MCF 10A (cell line): ENCODE measurements at regions of chr4 and their contacts with region 1.

Region 1: GRCh38 chr4:158996669-158997074 is 106.2 kb upstream of the RAPGEF2 start:
- DNase-seq: peak; percentile 97
- H3K4me3 Mint-ChIP-seq: no peak overlapping the region
- H3K27ac Mint-ChIP-seq: peak overlapping the region; percentile 63
- H3K4me1 Mint-ChIP-seq: peaks cover 17% of the 10 kb centered on the region
- H3K27me3 Mint-ChIP-seq: no peaks in the 10 kb centered on the region
- CTCF ChIP-seq: no peak

Region 2: GRCh38 chr4:158895797-158896576 is 100.7 kb before region 1 on chr4:
- CTCF ChIA-PET with region 1: no interaction called
- POLR2A ChIA-PET with region 1: no interaction called
- intact Hi-C with region 1: loop called (anchors 10 kb)
- DNase-seq: peak; percentile 30
- H3K4me3 Mint-ChIP-seq: no peak overlapping the region
- H3K27ac Mint-ChIP-seq: no peak overlapping the region
- H3K4me1 Mint-ChIP-seq: no peaks in the 10 kb centered on the region
- H3K27me3 Mint-ChIP-seq: no peaks in the 10 kb centered on the region
- CTCF ChIP-seq: no peak

Region 3: GRCh38 chr4:158914218-158914617 is 82.5 kb before region 1 on chr4:
- CTCF ChIA-PET with region 1: no interaction called
- POLR2A ChIA-PET with region 1: no interaction called
- intact Hi-C with region 1: no loop called
- DNase-seq: peak; percentile 68
- H3K4me3 Mint-ChIP-seq: no peak overlapping the region
- H3K27ac Mint-ChIP-seq: peak overlapping the region; percentile 44
- H3K4me1 Mint-ChIP-seq: peaks cover 11% of the 10 kb centered on the region
- H3K27me3 Mint-ChIP-seq: no peaks in the 10 kb centered on the region
- CTCF ChIP-seq: no peak

Region 4: DNA sequence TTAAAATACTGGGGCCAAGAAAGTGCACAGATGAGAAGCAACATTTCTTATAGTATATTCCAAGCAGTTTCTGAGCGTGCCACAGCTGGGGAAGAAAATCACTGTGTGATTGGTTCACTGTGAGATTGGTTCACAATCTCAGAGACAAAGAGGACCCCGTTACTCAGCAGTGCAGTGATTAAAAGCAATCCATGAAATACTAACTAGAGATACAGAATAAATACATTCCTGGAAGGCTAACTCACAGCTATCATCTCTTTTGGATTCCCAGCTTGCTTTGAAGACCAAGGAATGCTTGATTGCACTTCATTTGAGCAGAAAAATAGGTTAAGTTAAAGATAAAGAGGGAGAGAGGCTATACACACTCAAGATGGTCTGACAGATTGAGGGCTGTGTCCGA is 25.9 kb before region 1 on chr4:
- CTCF ChIA-PET with region 1: no interaction called
- POLR2A ChIA-PET with region 1: no interaction called
- intact Hi-C with region 1: no loop called
- DNase-seq: no peak
- H3K4me3 Mint-ChIP-seq: no peak overlapping the region
- H3K27ac Mint-ChIP-seq: no peak overlapping the region
- H3K4me1 Mint-ChIP-seq: no peaks in the 10 kb centered on the region
- H3K27me3 Mint-ChIP-seq: no peaks in the 10 kb centered on the region
- CTCF ChIP-seq: no peak

Region 5: GRCh38 chr4:159010563-159011260 is 14.0 kb after region 1 on chr4:
- CTCF ChIA-PET with region 1: no interaction called
- POLR2A ChIA-PET with region 1: interaction called, 28 read pairs
- intact Hi-C with region 1: no loop called
- DNase-seq: peak; percentile 91
- H3K4me3 Mint-ChIP-seq: no peak overlapping the region
- H3K27ac Mint-ChIP-seq: no peak overlapping the region
- H3K4me1 Mint-ChIP-seq: peaks cover 23% of the 10 kb centered on the region
- H3K27me3 Mint-ChIP-seq: no peaks in the 10 kb centered on the region
- CTCF ChIP-seq: no peak

Region 6: GRCh38 chr4:159071178-159071991 is 74.7 kb after region 1 on chr4:
- CTCF ChIA-PET with region 1: no interaction called
- POLR2A ChIA-PET with region 1: interaction called, 16 read pairs
- intact Hi-C with region 1: no loop called
- DNase-seq: peak; percentile 90
- H3K4me3 Mint-ChIP-seq: peak overlapping the region; percentile 48
- H3K27ac Mint-ChIP-seq: peak overlapping the region; percentile 87
- H3K4me1 Mint-ChIP-seq: peaks cover 24% of the 10 kb centered on the region
- H3K27me3 Mint-ChIP-seq: no peaks in the 10 kb centered on the region
- CTCF ChIP-seq: no peak

Region 7: GRCh38 chr4:159096434-159096833 is 99.8 kb after region 1 on chr4:
- CTCF ChIA-PET with region 1: no interaction called
- POLR2A ChIA-PET with region 1: no interaction called
- intact Hi-C with region 1: no loop called
- DNase-seq: no peak
- H3K4me3 Mint-ChIP-seq: no peak overlapping the region
- H3K27ac Mint-ChIP-seq: no peak overlapping the region
- H3K4me1 Mint-ChIP-seq: no peaks in the 10 kb centered on the region
- H3K27me3 Mint-ChIP-seq: no peaks in the 10 kb centered on the region
- CTCF ChIP-seq: no peak

Region 8: DNA sequence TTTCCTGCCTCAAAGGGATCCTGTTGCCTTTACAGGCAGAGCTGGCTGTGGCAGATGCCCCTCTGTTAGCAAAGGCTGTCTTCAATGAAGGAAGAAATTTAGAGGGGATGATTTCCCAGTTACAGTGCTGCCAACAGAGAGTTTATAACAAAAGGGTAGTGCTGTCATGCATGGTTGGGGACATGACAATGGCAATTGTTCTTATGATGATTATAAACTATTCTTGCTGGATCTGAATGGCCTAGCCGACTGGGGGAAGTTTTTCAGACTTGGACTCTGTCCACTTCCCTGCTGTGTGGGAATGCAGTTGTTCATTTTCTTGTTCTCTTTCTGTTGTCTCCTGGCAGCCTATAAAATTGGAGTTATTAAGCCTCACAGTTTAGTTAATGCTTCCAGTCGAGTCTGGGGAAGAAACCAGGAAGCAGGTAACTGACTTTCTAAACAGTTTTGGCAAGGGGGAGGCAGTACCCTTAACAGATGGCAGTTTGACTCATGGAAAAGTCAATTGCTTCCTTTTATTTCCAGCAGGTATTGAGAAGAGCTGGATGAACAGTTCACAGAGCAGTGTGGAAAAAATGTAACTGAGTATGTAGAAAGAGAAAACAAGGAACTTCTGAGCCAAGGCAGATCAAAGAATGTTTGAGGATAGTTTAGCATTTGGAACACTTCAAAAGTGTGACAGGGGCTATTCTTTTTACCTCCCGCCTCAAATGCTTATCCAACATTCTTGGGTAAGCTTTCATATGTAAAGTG is 688.8 kb after region 1 on chr4:
- CTCF ChIA-PET with region 1: no interaction called
- POLR2A ChIA-PET with region 1: no interaction called
- intact Hi-C with region 1: no loop called
- DNase-seq: no peak
- H3K4me3 Mint-ChIP-seq: no peak overlapping the region
- H3K27ac Mint-ChIP-seq: peak overlapping the region; percentile 85
- H3K4me1 Mint-ChIP-seq: peaks cover 18% of the 10 kb centered on the region
- H3K27me3 Mint-ChIP-seq: no peaks in the 10 kb centered on the region
- CTCF ChIP-seq: no peak